ENCODE measurements at regions of chr5 and their contacts with region 1.

Region 1: DNA sequence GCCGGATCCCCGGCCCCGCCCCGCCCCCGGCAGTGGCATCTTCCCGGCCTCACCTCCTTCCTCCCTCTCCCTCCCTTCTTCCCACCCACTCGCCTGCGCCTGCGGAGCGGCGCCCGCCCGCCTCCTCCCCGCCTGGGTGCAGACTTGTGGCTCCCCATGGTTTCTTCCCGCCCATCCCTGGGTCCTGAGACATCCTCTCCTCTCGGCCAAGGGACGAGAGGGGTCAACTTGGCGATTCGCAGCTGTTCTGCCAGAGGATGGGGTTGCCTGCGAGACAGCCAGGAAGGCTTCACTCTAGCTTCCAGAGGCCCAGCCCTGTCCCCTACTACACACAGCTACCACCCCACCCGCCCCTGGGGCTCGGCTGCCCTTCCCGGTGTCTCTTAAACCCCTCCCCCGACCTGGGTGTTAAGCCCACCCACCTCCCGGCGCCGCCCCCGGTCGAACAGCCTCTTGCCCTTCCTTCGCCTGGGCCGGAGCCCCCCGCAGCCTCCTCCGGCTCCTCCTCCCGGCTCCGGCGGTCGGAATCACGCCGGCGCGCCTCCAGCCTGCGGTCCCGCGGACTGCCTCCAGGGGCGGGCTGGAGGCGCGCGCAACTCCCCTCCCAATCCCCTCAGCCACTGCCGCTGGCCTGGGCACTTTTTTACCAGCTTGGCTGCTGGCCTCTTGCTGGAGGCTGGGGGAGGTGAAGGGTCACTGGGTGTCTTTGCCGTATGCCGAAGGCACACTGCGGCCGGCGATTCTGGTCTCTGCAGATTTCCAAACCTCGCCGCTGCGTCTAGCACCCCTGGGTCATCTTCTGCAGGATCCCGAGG is 1.9 kb downstream of the JADE2 start:
- DNase-seq: peak; percentile 84
- H3K4me3 Mint-ChIP-seq: peak overlapping the region; percentile 96
- H3K27ac Mint-ChIP-seq: peak overlapping the region; percentile 98
- H3K4me1 Mint-ChIP-seq: peaks cover 48% of the 10 kb centered on the region
- H3K27me3 Mint-ChIP-seq: no peaks in the 10 kb centered on the region

Region 2: DNA sequence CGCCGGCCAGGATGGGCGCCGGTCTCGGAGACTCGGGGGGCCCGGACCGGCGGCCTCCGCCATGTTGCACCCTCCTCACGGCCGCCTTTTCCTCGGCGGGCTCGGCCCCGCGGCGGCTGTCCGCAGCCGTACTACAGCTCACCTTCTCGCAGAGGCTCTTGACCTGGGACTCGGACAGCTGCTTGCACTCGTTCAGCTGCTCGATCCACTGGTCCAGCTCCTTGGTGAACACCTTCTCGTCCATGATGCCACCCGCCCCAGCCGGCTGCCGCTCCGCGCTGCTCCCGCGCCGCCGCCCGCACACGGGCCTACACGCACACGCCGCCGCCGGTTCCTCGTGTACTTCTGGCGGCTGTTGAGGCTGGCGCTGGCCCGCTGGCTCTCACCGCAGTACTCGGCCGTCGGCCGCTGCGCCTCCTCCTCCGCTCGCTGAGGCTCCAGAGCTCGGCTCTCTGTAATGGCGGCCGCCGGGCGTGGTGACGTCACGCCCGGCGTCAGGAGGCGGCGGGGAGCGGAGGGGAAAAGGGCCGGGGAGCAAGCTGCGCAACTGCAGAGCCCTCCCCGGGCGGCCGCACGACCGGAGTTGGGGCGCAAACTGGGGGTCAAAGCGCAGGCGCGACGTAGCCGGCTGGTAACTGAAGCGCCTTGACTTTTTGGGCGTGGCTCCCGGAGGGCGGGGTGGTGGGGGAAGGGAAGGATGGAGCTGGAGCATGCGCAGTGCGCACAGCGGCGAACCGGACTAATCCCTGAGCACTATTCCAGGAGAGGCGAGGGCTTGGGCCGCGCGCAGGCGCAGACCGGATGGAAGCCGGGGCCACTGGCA is 301.5 kb before region 1 on chr5 and contains the start of gene PPP2CA:
- CTCF ChIA-PET with region 1: interaction called, 4 read pairs
- POLR2A ChIA-PET with region 1: no interaction called
- intact Hi-C with region 1: loop called (anchors 1 kb)
- DNase-seq: peak; percentile 100
- H3K4me3 Mint-ChIP-seq: peak within 1 kb of the TSS; percentile 95
- H3K27ac Mint-ChIP-seq: peak within 1 kb of the TSS; percentile 97
- H3K4me1 Mint-ChIP-seq: peaks cover 50% of the 10 kb centered on the region
- H3K27me3 Mint-ChIP-seq: no peaks in the 10 kb centered on the region
- total RNA-seq, gene PPP2CA: 144 to 164 TPM

Region 3: GRCh38 chr5:134394932-134395331 is 132.4 kb before region 1 on chr5:
- CTCF ChIA-PET with region 1: no interaction called
- POLR2A ChIA-PET with region 1: no interaction called
- intact Hi-C with region 1: no loop called
- DNase-seq: no peak
- H3K4me3 Mint-ChIP-seq: no peak overlapping the region
- H3K27ac Mint-ChIP-seq: no peak overlapping the region
- H3K4me1 Mint-ChIP-seq: peaks cover 3% of the 10 kb centered on the region
- H3K27me3 Mint-ChIP-seq: no peaks in the 10 kb centered on the region

Region 4: DNA sequence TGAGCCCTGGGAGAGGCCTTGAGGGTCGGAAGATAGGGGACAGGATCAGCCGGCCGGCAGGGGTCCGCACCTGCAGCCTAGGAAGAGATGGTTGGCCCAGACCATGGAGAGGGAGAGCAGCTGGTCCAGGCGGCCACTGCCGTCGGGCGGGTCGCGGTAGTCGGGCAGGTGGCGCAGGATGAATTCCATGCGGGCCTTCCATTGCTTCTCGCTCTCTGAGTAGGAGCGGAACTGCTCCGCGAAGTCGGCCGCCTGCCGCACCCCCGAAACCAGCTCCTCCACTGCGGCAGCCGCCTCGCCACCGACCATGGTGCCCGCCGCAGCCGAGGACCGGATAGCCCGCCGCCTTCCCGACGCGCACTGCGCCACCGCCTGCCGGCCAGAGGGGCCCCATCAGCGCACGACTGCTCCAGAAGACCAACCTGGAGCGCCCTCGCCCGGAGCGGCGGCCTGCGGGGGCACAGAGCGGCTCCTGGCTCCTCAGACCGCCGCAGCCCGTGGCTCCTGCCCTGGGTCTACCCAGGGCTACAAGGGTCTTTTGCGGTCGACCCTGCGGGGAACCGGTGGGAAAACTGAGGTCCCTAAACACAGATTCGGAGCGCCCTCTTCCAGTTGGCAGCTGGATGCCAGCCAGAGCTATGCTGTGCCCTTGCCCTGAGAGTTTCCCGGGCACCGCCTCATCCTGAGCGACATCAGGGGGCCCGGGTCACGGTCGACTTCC is 115.6 kb before region 1 on chr5 and contains the start of gene CDKN2AIPNL:
- CTCF ChIA-PET with region 1: interaction called, 65 read pairs
- POLR2A ChIA-PET with region 1: interaction called, 21 read pairs
- intact Hi-C with region 1: loop called (anchors 1 kb)
- DNase-seq: peak; percentile 94
- H3K4me3 Mint-ChIP-seq: peak within 1 kb of the TSS; percentile 87
- H3K27ac Mint-ChIP-seq: peak within 1 kb of the TSS; percentile 73
- H3K4me1 Mint-ChIP-seq: peaks cover 31% of the 10 kb centered on the region
- H3K27me3 Mint-ChIP-seq: no peaks in the 10 kb centered on the region
- total RNA-seq, gene CDKN2AIPNL: 32.0 to 33.3 TPM

Region 5: GRCh38 chr5:134465816-134466240 is 61.5 kb before region 1 on chr5:
- CTCF ChIA-PET with region 1: interaction called, 6 read pairs
- POLR2A ChIA-PET with region 1: interaction called, 14 read pairs
- intact Hi-C with region 1: loop called (anchors 2 kb)
- DNase-seq: peak; percentile 77
- H3K4me3 Mint-ChIP-seq: peak overlapping the region; percentile 75
- H3K27ac Mint-ChIP-seq: peak overlapping the region; percentile 77
- H3K4me1 Mint-ChIP-seq: peaks cover 18% of the 10 kb centered on the region
- H3K27me3 Mint-ChIP-seq: no peaks in the 10 kb centered on the region

Region 6: GRCh38 chr5:134511788-134512650 is 15.3 kb before region 1 on chr5:
- CTCF ChIA-PET with region 1: interaction called, 6 read pairs
- POLR2A ChIA-PET with region 1: interaction called, 11 read pairs
- intact Hi-C with region 1: loop called (anchors 1 kb)
- DNase-seq: no peak
- H3K4me3 Mint-ChIP-seq: no peak overlapping the region
- H3K27ac Mint-ChIP-seq: peak overlapping the region; percentile 52
- H3K4me1 Mint-ChIP-seq: peaks cover 36% of the 10 kb centered on the region
- H3K27me3 Mint-ChIP-seq: no peaks in the 10 kb centered on the region

Region 7: DNA sequence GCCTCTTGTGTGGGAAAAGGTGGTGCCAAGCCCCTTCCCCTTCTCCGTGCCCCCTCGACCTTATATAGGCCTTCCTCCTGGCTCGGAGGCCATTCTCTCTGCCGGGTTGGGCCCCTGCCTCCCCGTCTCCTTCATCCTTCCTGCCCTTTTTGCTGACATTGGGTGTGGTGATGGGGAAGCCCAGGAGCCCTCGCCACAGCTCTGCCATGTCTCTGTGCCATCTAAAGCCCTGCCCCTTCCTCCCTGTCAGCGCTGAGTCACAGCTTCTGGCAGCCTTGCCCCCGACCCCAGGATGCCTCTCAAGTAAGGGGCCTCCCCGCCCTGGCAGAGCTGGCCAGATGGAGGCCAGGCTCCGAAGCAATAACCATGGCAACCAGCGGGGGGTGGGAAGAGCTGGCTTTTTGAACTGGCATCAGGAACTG is 28.5 kb after region 1 on chr5:
- CTCF ChIA-PET with region 1: interaction called, 33 read pairs
- POLR2A ChIA-PET with region 1: interaction called, 26 read pairs
- intact Hi-C with region 1: loop called (anchors 1 kb)
- DNase-seq: peak; percentile 97
- H3K4me3 Mint-ChIP-seq: peak overlapping the region; percentile 70
- H3K27ac Mint-ChIP-seq: peak overlapping the region; percentile 99
- H3K4me1 Mint-ChIP-seq: peaks cover 47% of the 10 kb centered on the region
- H3K27me3 Mint-ChIP-seq: no peaks in the 10 kb centered on the region

Region 8: GRCh38 chr5:134648425-134649162 is 121.2 kb after region 1 on chr5 and contains the start of gene SEC24A:
- CTCF ChIA-PET with region 1: no interaction called
- POLR2A ChIA-PET with region 1: interaction called, 3 read pairs
- intact Hi-C with region 1: loop called (anchors 1 kb)
- DNase-seq: peak; percentile 95
- H3K4me3 Mint-ChIP-seq: peak within 1 kb of the TSS; percentile 81
- H3K27ac Mint-ChIP-seq: peak within 1 kb of the TSS; percentile 99
- H3K4me1 Mint-ChIP-seq: peaks cover 22% of the 10 kb centered on the region
- H3K27me3 Mint-ChIP-seq: no peaks in the 10 kb centered on the region
- total RNA-seq, gene SEC24A: 30.8 to 31.4 TPM

Measured in activated CD4-positive, alpha-beta memory T cell treated with anti-CD3 and anti-CD28 coated beads for 36 hours (primary cell).